Sciatic nerve (tissue), 2 donors: ENCODE measurements at regions of chr15 and their contacts with region 1.

Region 1: DNA sequence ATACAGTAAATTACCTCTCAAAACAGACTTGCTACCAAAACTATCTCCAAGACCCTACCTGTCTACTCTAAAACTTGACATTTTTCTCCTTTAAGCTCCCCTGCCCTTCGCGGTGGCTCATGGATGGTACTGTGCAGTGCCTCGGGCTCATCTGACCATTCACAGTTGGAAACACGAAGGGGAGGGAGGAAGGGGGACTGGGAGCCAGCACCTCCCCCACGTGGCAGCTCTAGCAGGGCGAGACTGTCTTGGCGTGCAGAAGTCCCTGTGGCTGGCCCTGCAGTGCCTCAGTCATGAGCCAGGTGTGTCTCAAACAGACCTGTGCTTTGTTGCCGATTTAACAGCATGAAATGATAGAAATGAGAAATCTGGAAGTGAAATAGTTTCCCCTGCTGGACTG is 372.0 kb downstream of the GABRG3 start:
- DNase-seq: no peak
- ATAC-seq: no peak

Region 2: DNA sequence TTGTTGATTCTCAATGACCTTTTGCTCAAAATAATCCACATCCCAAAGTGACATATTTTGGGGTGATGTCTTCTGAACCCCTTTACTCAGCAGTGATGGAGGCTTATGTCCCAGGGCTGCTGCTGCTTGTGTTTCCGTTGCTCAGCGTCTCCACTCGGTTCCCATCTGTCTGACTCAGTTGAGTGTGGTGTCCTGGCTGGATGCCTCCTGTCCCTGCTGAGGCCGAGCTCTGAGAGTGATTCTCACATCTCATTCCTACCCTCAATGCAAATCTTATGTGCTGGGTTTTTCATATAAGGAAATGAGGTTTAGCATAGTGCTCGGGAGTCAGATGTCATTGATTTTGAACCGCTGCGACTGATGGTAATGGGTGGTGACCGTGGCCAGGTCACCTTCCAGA is 124.6 kb before region 1 on chr15:
- intact Hi-C with region 1: no loop called
- DNase-seq: no peak
- ATAC-seq: no peak

Region 3: GRCh38 chr15:27619204-27619603 is 276.2 kb after region 1 on chr15:
- intact Hi-C with region 1: loop called (anchors 2 kb)
- DNase-seq: no peak
- ATAC-seq: no peak